PC-3 (cell line): ENCODE measurements at regions of chr17 and their contacts with region 1.

Region 1: DNA sequence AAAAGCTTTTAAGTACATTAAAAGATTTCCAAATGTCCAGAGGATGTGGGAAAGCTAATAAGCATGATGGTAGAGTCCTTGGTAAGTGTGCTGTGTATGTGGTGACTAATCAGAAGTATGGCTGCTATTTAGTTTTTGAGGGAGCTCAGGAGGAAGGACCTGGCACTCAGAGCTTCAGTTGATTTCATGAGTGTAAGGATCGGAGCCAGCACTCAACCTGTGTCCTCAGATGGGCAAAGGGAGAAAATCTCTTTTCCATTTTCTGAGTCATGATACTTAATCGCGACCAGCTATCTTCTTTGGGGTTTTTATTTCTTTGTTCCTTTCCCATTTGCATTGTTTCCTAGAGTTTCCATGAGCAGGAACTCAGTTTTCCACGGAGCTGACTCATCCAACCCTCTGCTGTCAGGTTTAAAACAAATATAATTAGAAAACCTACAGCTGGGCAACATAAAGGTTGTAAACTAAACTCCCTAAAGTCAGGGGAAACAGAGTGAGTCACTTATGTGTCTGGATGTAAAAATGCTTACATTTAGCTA is 125.4 kb downstream of the MAP2K6 start:
- DNase-seq: peak; percentile 96
- ATAC-seq: peak; percentile 91
- H3K4me3 ChIP-seq: peak overlapping the region; percentile 43
- H3K27ac ChIP-seq: peak overlapping the region; percentile 96
- H3K4me1 ChIP-seq: peaks cover 27% of the 10 kb centered on the region
- H3K27me3 ChIP-seq: no peaks in the 10 kb centered on the region
- CTCF ChIP-seq: no peak

Region 2: DNA sequence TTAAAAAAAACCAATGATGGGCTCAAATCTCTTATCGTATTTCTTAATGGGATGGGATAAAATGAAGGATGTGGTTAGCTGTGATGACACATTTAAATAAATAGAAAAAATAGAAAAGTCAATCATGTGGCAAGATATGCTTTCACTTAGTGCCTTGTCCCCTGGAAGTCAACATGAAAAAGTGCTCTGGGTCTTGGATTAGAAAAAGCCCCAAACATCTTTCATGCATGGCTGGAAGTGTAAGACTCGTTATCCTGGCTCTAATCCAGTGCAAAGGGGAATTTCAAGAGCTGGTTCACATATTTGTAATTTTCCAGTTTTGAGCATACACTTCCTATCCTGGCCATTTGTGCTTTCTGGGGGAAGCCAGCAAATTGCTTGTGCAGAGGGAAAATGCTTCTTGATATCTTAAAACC is 35.5 kb after region 1 on chr17:
- CTCF ChIA-PET with region 1: no interaction called
- POLR2A ChIA-PET with region 1: no interaction called
- intact Hi-C with region 1: loop called (anchors 1 kb)
- DNase-seq: peak; percentile 97
- ATAC-seq: peak; percentile 87
- H3K4me3 ChIP-seq: no peak overlapping the region; the same call in 1 of the 2 replicates
- H3K27ac ChIP-seq: peak overlapping the region; percentile 58
- H3K4me1 ChIP-seq: peaks cover 25% of the 10 kb centered on the region
- H3K27me3 ChIP-seq: no peaks in the 10 kb centered on the region
- CTCF ChIP-seq: no peak

Region 3: GRCh38 chr17:69597898-69598692 is 58.2 kb after region 1 on chr17:
- CTCF ChIA-PET with region 1: no interaction called
- POLR2A ChIA-PET with region 1: no interaction called
- intact Hi-C with region 1: no loop called
- DNase-seq: peak; percentile 82
- ATAC-seq: peak; percentile 97
- H3K4me3 ChIP-seq: no peak overlapping the region
- H3K27ac ChIP-seq: peak overlapping the region; percentile 16; the same call in 1 of the 2 replicates
- H3K4me1 ChIP-seq: peaks cover 12% of the 10 kb centered on the region
- H3K27me3 ChIP-seq: no peaks in the 10 kb centered on the region
- CTCF ChIP-seq: no peak

Region 4: DNA sequence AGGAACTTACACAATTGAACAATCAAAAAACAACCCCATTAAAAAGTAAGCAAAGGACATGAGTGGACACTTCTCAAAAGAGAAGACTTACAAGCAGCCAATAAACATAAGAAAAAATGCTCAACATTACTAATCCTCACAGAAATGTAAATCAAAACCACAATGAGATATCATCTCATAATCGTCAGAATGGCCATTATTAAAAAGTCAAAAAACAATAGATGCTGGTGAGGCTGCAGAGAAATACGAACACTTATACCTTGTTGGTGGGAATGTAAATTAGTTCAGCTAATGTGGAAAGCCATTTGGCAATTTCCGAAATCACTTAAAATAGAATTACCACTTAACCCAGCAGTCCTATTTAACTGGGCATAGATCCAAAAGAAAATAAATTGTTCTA is 233.2 kb after region 1 on chr17:
- CTCF ChIA-PET with region 1: no interaction called
- POLR2A ChIA-PET with region 1: no interaction called
- intact Hi-C with region 1: no loop called
- DNase-seq: peak; percentile 65
- ATAC-seq: peak; percentile 30; the same call in 1 of the 2 replicates
- H3K4me3 ChIP-seq: no peak overlapping the region
- H3K27ac ChIP-seq: no peak overlapping the region
- H3K4me1 ChIP-seq: peaks cover 30% of the 10 kb centered on the region
- H3K27me3 ChIP-seq: no peaks in the 10 kb centered on the region
- CTCF ChIP-seq: no peak